ENCODE measurements at regions of chr6 and their contacts with region 1.

Region 1: DNA sequence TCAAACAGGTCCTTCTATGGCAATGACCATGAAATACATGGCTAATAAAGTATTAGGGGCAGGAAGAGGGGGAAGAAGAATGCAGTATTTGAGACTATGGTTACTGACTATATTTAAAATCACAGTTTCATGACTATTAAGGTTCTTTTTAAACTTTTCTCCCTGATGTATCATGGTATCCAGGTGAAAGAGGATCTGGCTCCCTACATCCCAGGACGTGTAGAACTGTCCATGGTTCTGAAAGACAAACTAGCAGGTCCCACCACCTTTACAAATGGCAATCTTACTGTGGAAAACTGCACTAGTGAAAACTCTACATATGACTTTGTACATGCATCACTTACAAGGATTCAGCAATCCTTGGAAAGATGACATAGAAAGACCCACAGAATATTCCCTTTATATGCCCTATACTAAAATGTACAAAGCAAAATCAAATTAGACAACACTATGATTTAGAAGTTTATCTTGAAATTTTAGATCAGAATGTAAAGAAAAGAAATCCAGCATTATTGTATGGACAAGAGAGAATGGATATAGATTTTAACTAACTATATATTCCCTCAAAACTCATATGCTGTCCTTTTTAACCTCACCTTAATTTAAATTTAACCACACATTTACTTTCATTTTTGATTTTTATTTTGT is 33.5 kb downstream of the RPP21 start:
- DNase-seq: no peak
- H3K4me3 ChIP-seq: no peak overlapping the region
- H3K27ac ChIP-seq: no peak overlapping the region
- H3K4me1 ChIP-seq: no peaks in the 10 kb centered on the region
- H3K27me3 ChIP-seq: no peaks in the 10 kb centered on the region
- CTCF ChIP-seq: no peak
- EP300 ChIP-seq: no peak
- POLR2A ChIP-seq: no peak
- RAD21 ChIP-seq: no peak

Region 2: GRCh38 chr6:30357678-30358540 is 20.5 kb before region 1 on chr6:
- CTCF ChIA-PET with region 1: interaction called, 12 read pairs
- POLR2A ChIA-PET with region 1: no interaction called
- DNase-seq: peak; percentile 71 to 79
- H3K4me3 ChIP-seq: peak overlapping the region; percentile 51 to 80 (median 76)
- H3K27ac ChIP-seq: no peak overlapping the region
- H3K4me1 ChIP-seq: peaks cover 0 to 6% (median 2%) of the 10 kb centered on the region in 4 experiments; a peak in 4 of 7 replicates
- H3K27me3 ChIP-seq: peaks cover 0 to 4% (median 2%) of the 10 kb centered on the region in 4 experiments; a peak in 3 of 7 replicates
- CTCF ChIP-seq: peak in 2 of 3 experiments; percentile 73 to 80; a peak in 3 of 4 replicates
- EP300 ChIP-seq: no peak
- POLR2A ChIP-seq: peak in 1 of 2 experiments; percentile 36; a peak in 2 of 3 replicates
- RAD21 ChIP-seq: peak; percentile 78 to 79

Region 3: DNA sequence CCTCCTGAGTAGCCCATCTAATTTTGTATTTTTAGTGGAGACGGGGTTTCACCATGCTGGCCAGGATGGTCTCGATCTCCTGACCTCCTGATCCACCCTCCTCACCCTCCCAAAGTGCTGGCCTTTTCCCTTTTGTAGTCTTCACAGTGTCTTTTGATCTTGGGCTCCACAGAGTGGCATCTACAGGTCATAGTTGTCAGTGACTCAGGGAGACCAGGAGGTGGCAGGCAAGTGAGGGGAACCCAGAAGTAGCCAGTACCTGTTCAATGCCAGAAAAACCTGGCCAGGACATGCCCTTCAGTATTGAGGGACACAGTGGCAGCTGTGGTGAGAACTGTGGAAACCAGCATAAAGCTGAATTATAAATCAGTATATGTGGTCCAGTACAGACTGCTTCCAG is 13.8 kb before region 1 on chr6:
- CTCF ChIA-PET with region 1: interaction called, 14 read pairs
- POLR2A ChIA-PET with region 1: no interaction called
- DNase-seq: no peak
- H3K4me3 ChIP-seq: no peak overlapping the region
- H3K27ac ChIP-seq: no peak overlapping the region
- H3K4me1 ChIP-seq: peaks cover 0 to 3% (median 0%) of the 10 kb centered on the region in 4 experiments; a peak in 1 of 7 replicates
- H3K27me3 ChIP-seq: peaks cover 0 to 4% (median 1%) of the 10 kb centered on the region in 4 experiments; a peak in 2 of 7 replicates
- CTCF ChIP-seq: peak; percentile 48 to 68 (median 55)
- EP300 ChIP-seq: no peak
- POLR2A ChIP-seq: no peak
- RAD21 ChIP-seq: peak; percentile 44 to 61

Region 4: DNA sequence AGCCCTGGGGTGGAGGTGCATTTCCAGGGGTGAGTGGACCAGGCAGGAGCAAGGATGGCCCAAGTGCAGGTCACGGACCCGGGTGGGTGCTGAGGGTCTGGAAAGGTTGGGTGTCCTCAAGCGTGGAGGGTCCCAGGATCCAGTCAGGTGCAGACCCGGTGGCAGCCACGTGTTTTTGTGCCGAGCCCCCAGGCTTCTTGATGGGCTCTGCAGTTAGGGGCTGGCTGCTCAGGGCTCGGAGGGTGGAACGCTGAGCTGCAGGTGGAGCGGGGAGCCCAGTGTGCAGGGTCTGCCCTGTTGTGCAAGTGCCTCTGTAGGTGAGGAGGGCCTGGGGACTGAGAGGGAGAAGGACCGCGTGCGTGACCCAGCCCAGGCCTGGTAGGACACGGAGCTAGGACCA is 40.0 kb after region 1 on chr6:
- CTCF ChIA-PET with region 1: no interaction called
- POLR2A ChIA-PET with region 1: no interaction called
- DNase-seq: no peak
- H3K4me3 ChIP-seq: no peak overlapping the region
- H3K27ac ChIP-seq: no peak overlapping the region
- H3K4me1 ChIP-seq: no peaks in the 10 kb centered on the region
- H3K27me3 ChIP-seq: peaks cover 0 to 5% (median 0%) of the 10 kb centered on the region in 4 experiments; a peak in 2 of 7 replicates
- CTCF ChIP-seq: no peak
- EP300 ChIP-seq: no peak
- POLR2A ChIP-seq: no peak
- RAD21 ChIP-seq: no peak

Measured in H1 (cell line).